ENCODE measurements at regions of chr2 and their contacts with region 1.

Region 1: GRCh38 chr2:70779911-70780545 is 10.4 kb downstream of the FIGLA start:
- ATAC-seq: peak in 2 of 8 experiments; percentile 59 to 80
- H3K4me3 ChIP-seq: no peak overlapping the region
- H3K27ac ChIP-seq: no peak overlapping the region
- H3K4me1 ChIP-seq: no peaks in the 10 kb centered on the region

Region 2: DNA sequence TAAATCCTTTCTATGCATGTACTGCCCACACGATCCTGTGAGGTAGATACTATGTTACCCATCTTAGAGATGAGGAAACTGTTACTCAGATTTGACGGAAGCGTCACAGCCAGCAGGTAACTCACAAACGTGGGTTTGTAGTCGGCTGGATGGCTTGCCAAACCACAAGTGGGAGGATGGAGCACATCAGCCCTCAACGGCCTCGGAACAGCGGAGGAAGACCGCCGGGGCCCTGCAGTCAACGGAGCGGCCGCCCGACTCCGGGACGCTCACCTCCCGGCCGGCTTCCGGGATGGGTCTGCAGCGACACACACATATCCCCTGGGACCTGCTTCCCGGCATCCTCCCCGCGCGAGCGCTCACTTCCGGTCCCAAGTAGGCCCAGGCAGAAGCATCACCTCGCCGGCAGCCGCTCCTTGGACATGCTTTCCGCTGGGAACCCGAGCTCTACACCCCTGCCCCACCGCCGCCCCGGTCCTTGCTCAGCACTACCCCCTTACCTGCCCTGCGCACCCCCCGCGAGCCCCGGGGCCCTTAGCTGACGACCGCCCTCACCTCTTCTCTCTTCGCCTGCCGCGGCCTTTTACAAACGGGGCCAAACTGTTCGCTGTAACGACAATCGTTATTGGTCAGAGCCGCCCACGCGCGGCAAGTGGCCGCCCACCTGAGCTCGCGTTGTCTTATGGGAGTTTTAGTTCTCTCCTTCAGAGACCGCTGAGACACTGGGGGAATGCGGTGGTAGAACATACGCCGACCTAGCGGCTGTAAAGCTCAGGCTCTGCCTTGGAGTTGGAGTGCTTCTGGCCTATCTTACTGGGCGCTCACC is 589.4 kb before region 1 on chr2 and contains the start of gene C2orf42:
- in situ Hi-C with region 1: no loop called
- ATAC-seq: peak; percentile 92 to 97 (median 96)
- H3K4me3 ChIP-seq: peak within 1 kb of the TSS; percentile 67 to 82 (median 76)
- H3K27ac ChIP-seq: peak within 1 kb of the TSS; percentile 99
- H3K4me1 ChIP-seq: no peaks in the 10 kb centered on the region
- total RNA-seq, gene C2orf42: 9.8 to 18.7 (median 14.5) TPM

Region 3: GRCh38 chr2:70698847-70699246 is 81.2 kb before region 1 on chr2:
- in situ Hi-C with region 1: loop called in 1 of 9 experiments (anchors 10 kb)
- ATAC-seq: peak in 2 of 8 experiments; percentile 41 to 50
- H3K4me3 ChIP-seq: no peak overlapping the region
- H3K27ac ChIP-seq: no peak overlapping the region
- H3K4me1 ChIP-seq: peaks cover 0 to 3% of the 10 kb centered on the region in 2 donors

Region 4: DNA sequence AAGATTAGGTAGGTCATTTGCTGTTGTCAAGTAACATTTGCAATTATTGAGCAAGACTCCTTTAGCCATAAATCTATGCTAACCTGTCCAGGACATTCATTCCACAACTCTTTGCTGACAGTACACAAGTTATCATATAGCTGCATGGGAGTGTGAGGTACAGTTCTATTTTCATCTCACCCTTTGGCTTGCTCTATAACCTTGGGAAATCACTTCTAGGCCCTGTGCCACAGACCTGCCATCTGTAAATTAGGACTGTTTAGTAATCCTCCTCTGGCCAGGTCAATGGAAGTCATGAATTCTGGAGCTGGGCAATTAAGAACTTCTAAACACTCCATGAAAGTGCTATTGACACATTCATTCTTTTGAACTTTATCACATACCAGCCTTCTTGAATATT is 481.5 kb after region 1 on chr2:
- in situ Hi-C with region 1: no loop called
- ATAC-seq: no peak
- H3K4me3 ChIP-seq: no peak overlapping the region
- H3K27ac ChIP-seq: no peak overlapping the region
- H3K4me1 ChIP-seq: no peaks in the 10 kb centered on the region

Region 5: DNA sequence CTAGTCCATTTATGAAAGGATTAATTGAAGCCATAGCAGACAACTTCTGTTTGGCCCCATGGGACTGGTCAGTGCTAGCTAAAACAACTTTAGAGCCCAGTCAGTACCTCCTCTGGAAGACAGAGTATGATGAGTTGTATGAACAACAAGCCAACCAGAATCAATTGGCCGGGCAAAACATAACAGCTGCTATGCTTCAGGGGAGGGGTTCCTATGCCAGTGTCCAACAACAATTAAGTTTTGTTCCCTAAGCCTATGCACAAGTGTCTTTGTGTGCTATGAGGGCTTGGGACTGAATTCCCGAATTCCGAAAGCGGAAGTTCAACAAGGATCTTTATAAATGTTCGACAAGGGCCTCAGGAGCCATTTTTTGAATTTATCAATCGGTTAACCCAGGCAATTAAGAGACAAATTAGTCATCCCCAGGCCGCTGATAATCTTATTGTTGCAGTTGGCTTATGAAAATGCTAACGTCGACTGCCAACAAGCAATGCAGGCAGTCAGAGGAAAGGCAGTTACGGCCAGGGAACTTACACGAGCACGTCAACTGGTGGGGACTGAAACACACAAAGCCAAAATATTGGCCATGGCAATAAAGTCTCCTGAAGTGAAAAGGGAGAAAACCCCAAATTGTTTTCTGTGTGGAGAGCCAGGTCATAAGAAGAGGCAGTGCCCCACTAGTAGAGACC is 609.5 kb after region 1 on chr2:
- in situ Hi-C with region 1: no loop called
- ATAC-seq: no peak
- H3K4me3 ChIP-seq: no peak overlapping the region
- H3K27ac ChIP-seq: no peak overlapping the region
- H3K4me1 ChIP-seq: no peaks in the 10 kb centered on the region